PC-3 (cell line): ENCODE measurements at regions of chr3 and their contacts with region 1.

Region 1: DNA sequence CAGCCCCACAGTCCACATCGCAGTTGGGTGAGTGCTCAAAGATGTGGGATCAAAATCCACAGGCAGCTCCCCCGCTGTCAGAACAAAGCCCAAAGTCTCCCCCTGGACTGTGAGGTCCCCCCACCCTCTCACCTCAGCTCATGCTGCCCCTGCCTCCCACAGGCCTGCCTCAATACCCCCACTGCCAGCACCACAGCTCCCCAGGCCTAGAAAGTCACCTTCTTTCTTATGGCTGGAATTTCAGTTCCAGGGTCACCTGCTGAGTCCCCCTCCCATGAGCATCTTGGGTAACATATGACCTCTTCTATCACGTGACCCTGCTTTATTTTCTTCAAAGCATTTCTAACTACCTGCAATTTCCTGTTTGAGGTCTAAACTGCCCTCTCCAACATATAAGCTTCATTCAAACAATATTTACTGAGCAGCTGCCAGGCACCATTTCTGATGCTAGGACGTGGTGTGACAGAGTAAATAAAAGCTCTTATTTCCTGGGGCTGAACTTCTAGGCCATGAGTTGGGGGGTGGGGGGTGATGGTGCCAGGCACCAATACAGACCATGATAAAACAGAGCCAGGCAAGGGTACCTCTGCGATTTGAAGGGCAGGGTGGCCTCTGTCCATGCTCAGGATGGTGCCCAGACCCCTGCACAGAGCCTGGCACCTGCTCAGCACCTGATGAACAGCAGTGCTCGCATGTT is 2.4 kb upstream of the TMEM89 start:
- DNase-seq: no peak
- ATAC-seq: peak; percentile 62
- H3K4me3 ChIP-seq: no peak overlapping the region
- H3K27ac ChIP-seq: no peak overlapping the region
- H3K4me1 ChIP-seq: no peaks in the 10 kb centered on the region
- H3K27me3 ChIP-seq: no peaks in the 10 kb centered on the region
- CTCF ChIP-seq: no peak

Region 2: GRCh38 chr3:48716982-48717746 is 93.2 kb after region 1 on chr3 and contains the start of gene IP6K2:
- CTCF ChIA-PET with region 1: no interaction called
- POLR2A ChIA-PET with region 1: interaction called, 13 read pairs
- intact Hi-C with region 1: no loop called
- DNase-seq: peak; percentile 99
- ATAC-seq: peak; percentile 96
- H3K4me3 ChIP-seq: peak within 1 kb of the TSS; percentile 88
- H3K27ac ChIP-seq: peak within 1 kb of the TSS; percentile 47
- H3K4me1 ChIP-seq: peaks cover 12% of the 10 kb centered on the region
- H3K27me3 ChIP-seq: no peaks in the 10 kb centered on the region
- CTCF ChIP-seq: no peak
- total RNA-seq, gene IP6K2: 88.1 and 102 TPM in 2 replicates

Region 3: DNA sequence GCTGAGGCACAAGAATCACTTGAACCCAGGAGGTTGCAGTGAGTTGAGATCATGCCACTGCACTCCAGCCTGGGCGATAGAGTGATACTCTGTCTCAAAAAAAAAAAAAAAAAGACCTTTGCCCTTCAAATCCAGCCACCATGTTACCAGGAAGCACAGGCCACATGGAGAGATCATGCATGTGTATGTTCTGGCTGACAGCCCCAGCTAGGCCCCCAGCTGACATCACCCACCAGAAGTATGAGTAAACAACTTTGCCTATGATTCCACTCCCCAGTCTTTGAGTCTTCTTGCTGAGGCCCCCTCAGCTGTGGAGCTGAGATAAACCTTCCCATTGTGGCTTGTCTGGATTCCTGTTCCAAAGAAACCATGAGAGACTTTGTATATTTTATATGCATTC is 291.3 kb after region 1 on chr3:
- CTCF ChIA-PET with region 1: no interaction called
- POLR2A ChIA-PET with region 1: no interaction called
- intact Hi-C with region 1: no loop called
- DNase-seq: no peak
- ATAC-seq: no peak
- H3K4me3 ChIP-seq: no peak overlapping the region
- H3K27ac ChIP-seq: no peak overlapping the region
- H3K4me1 ChIP-seq: peaks cover 7% of the 10 kb centered on the region; the same call in 1 of the 2 replicates
- H3K27me3 ChIP-seq: no peaks in the 10 kb centered on the region
- CTCF ChIP-seq: no peak